Head of caudate nucleus (tissue), 42 donors: ENCODE measurements at regions of chr3 and their contacts with region 1.

Region 1: GRCh38 chr3:131502530-131503245 is at the start of gene MRPL3:
- DNase-seq: peak; percentile 77 to 94 (median 87)

Region 2: GRCh38 chr3:131033480-131034080 is 469.1 kb before region 1 on chr3:
- intact Hi-C with region 1: loop called (anchors 5 kb)
- DNase-seq: peak in 7 of 42 donors; percentile 18 to 60 (median 27)

Region 3: GRCh38 chr3:131381444-131382291 is 121.0 kb before region 1 on chr3 and contains the start of gene NUDT16:
- intact Hi-C with region 1: loop called (anchors 5 kb)
- DNase-seq: peak; percentile 91 to 99 (median 98)

Region 4: GRCh38 chr3:131602011-131602764 is 99.5 kb after region 1 on chr3:
- intact Hi-C with region 1: no loop called
- DNase-seq: no peak